Dendritic cell treated with granulocyte-macrophage colony-stimulating factor and Interleukin-4, amounts not matched to agents 40 ng/mL and 50 ng/mL, for 4 days (primary cell): ENCODE measurements at regions of chr9 and their contacts with region 1.

Region 1: DNA sequence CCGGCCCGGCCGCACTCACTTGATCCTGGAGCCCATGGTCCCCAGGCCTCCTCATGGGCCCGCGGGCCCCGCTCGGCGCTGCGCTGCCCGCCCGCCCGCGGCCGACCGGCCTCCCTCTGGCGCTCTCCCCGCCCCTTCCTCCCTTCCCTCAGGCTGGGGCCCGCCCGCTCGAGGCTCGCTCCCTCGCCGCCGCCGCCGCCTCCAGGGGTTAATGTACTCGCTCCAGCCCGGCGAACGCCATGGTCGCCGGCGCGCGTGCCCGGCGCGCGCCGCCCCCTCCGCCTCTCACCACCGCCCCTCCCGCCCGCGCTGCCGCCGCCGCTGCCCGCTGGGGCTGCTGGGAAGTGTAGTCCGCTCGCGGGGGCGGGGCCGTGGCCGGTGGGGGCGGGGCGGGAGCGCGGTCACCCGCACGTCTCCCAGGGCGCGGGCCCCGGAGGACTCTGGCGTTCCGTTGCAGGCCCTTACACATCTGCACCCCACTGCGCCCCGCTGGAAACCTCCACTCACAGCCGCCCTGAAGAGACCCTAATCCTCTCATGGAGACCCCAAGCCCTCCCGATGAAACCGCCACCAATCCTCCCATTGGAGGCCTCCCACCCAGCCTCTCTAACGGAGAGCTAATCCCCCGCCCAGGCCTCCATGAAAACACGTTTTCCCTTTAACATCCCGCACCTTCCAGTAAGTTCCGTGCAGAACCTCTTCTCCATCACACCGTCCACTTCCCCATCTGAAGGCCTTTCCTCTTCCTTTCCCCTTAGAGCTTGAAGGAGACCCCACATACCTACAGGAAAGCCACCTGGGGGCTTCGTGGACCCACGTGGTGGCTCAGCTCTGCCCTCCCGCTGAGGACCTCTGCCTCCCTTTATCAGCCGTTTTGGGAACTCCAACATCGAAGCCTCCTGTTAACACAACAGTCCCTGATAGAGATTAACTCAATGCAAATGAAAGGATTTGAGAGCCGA is at the start of gene DENND1A:
- H3K4me3 Mint-ChIP-seq: peak within 1 kb of the TSS; percentile 85
- H3K27ac Mint-ChIP-seq: peak within 1 kb of the TSS; percentile 61
- H3K4me1 Mint-ChIP-seq: peaks cover 56% of the 10 kb centered on the region
- H3K27me3 Mint-ChIP-seq: peaks cover 6% of the 10 kb centered on the region

Region 2: DNA sequence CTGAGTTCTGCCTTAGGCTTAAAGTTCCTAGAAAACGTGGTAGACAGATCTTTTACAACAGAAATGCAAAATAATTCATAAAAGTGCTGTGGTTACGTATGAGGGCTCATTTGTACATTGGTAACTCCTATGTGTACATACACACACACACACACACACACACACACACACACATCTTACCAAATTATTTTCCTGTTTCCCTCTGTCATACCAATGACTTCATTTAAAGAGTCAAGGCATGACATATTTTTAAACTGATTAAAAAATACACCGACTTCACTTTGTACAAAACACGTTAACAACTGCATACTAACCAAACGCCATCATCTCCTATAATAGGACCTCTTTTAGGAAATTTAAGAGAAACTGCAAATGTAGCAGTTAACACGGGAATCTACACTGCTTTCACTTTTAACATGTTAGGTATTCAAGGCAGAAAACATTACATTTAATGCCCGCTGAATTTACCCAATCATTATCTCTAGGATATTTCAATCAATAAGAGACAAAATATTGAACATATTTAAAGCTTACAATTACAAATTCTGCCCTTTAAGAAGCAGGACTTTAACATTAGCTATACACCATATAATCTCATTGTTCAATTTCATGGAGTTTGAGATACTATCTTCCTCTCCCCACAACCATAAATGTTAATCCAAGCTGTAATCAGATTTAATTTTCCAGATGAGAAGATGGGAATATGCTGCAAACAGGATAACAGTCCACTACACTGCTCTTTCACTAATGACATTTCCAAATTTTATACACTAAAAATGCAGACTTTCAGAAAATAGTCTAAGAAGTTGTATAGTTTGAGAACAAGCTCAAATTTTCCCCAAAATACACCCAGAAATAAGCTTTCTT is 133.3 kb before region 1 on chr9:
- intact Hi-C with region 1: loop called (anchors 10 kb)
- H3K4me3 Mint-ChIP-seq: peak overlapping the region; percentile 58
- H3K27ac Mint-ChIP-seq: peak overlapping the region; percentile 35
- H3K4me1 Mint-ChIP-seq: peaks cover 26% of the 10 kb centered on the region
- H3K27me3 Mint-ChIP-seq: no peaks in the 10 kb centered on the region

Region 3: DNA sequence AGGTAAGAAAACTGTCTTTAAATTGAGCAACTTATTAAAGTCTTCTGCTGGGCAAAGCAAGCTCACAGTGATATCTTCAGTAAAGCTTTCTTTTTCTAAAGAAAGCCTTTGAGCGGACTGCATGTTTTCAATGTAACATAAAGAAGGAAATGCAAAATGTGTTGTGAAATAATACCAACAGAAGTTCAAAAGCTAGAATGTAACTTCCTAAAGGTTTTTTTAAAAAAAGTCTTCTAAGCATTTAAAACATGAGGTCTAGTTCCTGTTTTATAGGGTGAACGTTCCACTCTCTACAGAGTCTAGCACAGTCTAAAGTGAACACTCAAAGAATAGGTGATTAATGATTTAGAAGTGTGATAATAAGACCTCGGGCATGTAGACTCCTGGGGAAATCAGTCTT is 63.1 kb before region 1 on chr9:
- intact Hi-C with region 1: loop called (anchors 2 kb)
- H3K4me3 Mint-ChIP-seq: peak overlapping the region; percentile 40
- H3K27ac Mint-ChIP-seq: peak overlapping the region; percentile 96
- H3K4me1 Mint-ChIP-seq: peaks cover 58% of the 10 kb centered on the region
- H3K27me3 Mint-ChIP-seq: no peaks in the 10 kb centered on the region

Region 4: DNA sequence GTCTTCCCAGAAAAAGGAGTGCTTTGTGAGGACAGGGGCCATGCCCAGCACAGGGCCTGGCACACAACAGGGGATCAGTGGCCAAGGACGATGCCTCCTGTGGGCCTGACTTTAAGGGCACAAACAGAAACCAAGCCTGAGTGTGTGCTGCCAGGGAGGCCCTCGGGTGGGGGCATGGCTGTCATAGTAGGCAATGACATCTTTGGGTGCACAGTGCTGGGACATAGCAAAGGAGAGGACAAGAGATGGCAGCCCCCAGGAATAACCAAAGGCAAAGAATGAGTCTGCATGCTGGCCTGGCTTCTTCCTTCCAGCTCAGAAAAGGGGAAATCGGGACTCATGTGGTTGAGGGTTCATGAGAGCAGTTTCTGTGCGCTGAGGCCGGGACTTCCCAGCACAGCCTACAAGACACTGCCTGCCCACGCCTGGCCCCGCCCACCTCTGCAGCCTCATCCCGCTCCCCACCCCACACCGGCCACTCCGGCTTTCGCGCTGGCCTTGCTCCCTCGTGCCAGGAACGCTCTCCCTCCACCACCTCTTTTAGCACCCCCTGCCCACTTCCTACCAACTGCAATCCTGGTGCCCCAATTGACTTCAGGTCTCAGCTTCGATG is 67.6 kb after region 1 on chr9:
- intact Hi-C with region 1: loop called (anchors 5 kb)
- H3K4me3 Mint-ChIP-seq: no peak overlapping the region
- H3K27ac Mint-ChIP-seq: peak overlapping the region; percentile 80
- H3K4me1 Mint-ChIP-seq: peaks cover 50% of the 10 kb centered on the region
- H3K27me3 Mint-ChIP-seq: peaks cover 70% of the 10 kb centered on the region